ENCODE measurements at regions of chr16 and their contacts with region 1.

Region 1: GRCh38 chr16:68737046-68737729 is at the start of gene CDH1:
- DNase-seq: peak; percentile 98 to 99
- H3K4me3 ChIP-seq: peak within 1 kb of the TSS; percentile 99
- H3K4me3 Mint-ChIP-seq: peak within 1 kb of the TSS; percentile 88
- H3K27ac Mint-ChIP-seq: peak within 1 kb of the TSS; percentile 88
- H3K4me1 ChIP-seq: peaks cover 63% of the 10 kb centered on the region
- H3K4me1 Mint-ChIP-seq: peaks cover 44% of the 10 kb centered on the region
- H3K27me3 ChIP-seq: no peaks in the 10 kb centered on the region
- H3K27me3 Mint-ChIP-seq: no peaks in the 10 kb centered on the region
- CTCF ChIP-seq: no peak
- total RNA-seq, gene CDH1: 712 and 783 TPM in 2 replicates

Region 2: DNA sequence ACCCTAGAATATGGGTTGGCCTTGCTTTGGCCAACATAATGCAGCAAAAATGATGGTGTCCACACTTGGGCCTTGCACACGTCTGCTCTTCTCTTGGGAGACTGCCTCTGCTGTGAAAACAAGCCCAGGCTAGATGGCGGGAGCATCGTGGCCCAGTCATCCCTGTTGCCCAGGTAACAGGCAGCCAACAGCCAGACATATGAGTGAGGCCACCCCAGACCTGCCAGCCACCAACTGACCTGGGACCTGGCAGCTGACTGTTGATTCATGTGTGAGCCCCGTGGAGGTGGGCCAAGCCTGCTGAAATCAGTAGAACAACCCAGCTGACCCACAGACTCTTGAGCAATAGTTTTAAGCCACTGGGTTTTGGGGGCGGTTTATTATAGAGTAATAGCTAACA is 131.4 kb before region 1 on chr16:
- CTCF ChIA-PET with region 1: no interaction called
- POLR2A ChIA-PET with region 1: interaction called, 17 read pairs
- intact Hi-C with region 1: no loop called
- DNase-seq: no peak
- H3K4me3 ChIP-seq: no peak overlapping the region
- H3K4me3 Mint-ChIP-seq: no peak overlapping the region
- H3K27ac Mint-ChIP-seq: no peak overlapping the region
- H3K4me1 ChIP-seq: no peaks in the 10 kb centered on the region
- H3K4me1 Mint-ChIP-seq: no peaks in the 10 kb centered on the region
- H3K27me3 ChIP-seq: no peaks in the 10 kb centered on the region
- H3K27me3 Mint-ChIP-seq: no peaks in the 10 kb centered on the region
- CTCF ChIP-seq: no peak

Region 3: DNA sequence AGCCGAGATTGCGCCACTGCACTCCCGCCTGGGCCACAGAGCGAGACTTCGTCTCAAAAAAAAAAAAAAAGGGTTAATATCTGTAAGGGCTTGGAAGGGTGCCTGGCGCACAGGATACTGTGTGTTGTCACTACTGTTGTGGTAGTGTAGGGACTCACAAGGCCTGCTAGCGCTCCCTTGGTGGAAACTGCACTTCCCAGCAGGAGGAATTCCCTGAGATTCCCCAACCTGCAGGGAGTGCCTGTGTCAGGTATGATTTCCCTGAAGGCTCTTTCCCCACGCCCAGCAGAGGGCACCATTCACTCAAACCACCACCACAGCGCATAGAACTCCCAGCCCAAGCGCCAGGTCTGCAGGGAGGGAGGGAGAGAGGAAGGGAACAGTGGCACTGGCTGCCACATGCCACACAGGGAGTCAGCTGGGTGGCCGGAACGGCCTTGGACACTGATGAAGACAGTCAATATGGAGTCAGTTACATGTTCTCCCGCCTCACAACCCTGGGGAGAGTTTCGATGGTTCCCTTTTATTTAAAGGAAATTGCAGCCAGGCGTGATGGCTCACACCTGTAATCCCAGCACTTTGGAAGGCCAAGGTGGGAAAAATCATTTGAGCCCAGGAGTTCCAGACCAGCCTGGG is 32.8 kb before region 1 on chr16:
- CTCF ChIA-PET with region 1: interaction called, 3 read pairs
- POLR2A ChIA-PET with region 1: interaction called, 5 read pairs
- intact Hi-C with region 1: loop called (anchors 1 kb)
- DNase-seq: peak; percentile 93 to 94
- H3K4me3 ChIP-seq: no peak overlapping the region
- H3K4me3 Mint-ChIP-seq: no peak overlapping the region
- H3K27ac Mint-ChIP-seq: peak overlapping the region; percentile 49
- H3K4me1 ChIP-seq: peaks cover 19% of the 10 kb centered on the region
- H3K4me1 Mint-ChIP-seq: peaks cover 21% of the 10 kb centered on the region
- H3K27me3 ChIP-seq: no peaks in the 10 kb centered on the region
- H3K27me3 Mint-ChIP-seq: no peaks in the 10 kb centered on the region
- CTCF ChIP-seq: peak; percentile 92 to 97

Region 4: DNA sequence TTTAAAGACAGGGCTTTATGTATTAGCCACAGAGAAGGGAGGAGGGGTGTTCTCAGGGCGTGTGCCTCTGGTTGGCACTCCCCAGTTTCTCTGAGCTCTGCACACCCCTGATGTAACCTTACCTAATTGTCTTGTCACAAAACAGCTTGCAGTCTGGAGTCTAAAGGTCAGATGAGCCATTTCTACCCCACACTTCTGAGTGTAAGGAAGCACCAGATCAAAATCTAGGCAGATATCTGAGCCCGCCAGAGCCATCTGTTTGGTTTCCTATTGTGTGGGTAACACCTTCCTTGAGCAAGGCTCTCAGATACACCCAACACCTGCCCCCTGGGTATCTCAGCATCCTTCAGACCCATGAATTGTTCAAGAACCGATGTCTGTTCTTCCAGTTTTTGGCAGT is 15.4 kb after region 1 on chr16:
- CTCF ChIA-PET with region 1: interaction called, 7 read pairs
- POLR2A ChIA-PET with region 1: interaction called, 12 read pairs
- intact Hi-C with region 1: no loop called
- DNase-seq: peak; percentile 61 to 66
- H3K4me3 ChIP-seq: no peak overlapping the region
- H3K4me3 Mint-ChIP-seq: peak overlapping the region; percentile 22
- H3K27ac Mint-ChIP-seq: peak overlapping the region; percentile 74
- H3K4me1 ChIP-seq: peaks cover 84% of the 10 kb centered on the region
- H3K4me1 Mint-ChIP-seq: peaks cover 56% of the 10 kb centered on the region
- H3K27me3 ChIP-seq: no peaks in the 10 kb centered on the region
- H3K27me3 Mint-ChIP-seq: no peaks in the 10 kb centered on the region
- CTCF ChIP-seq: no peak

Region 5: DNA sequence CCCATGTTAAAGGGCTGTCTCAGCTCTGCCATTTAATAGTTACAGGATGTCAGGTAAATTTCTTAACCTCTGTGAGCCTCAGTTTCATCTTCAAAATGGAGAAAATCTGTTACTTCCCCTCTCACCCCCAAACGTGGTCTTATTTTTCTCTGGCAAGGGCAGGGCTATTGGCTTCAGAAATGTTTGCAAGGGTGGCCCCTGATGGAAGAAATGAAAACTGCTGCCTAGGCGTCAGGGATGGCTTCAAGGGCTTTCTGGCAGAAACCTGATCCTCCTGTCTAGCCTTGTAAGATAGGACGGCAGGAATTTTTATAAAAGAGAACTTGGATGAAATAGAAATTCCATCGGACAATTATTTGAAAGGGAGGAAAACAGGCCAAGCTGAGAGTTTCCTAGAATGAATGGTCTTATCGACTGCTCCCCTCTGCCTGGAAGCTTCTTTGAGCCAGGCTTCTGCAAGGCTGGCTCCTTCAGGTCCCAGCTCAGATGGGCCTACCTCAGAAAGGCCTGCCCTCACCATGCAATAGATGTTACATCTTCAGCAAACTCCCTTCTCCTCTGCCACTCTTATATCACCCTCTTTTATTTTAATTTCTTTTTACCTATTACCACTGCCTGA is 63.2 kb after region 1 on chr16:
- CTCF ChIA-PET with region 1: interaction called, 3 read pairs
- POLR2A ChIA-PET with region 1: interaction called, 8 read pairs
- intact Hi-C with region 1: loop called (anchors 1 kb)
- DNase-seq: peak; percentile 83 to 88
- H3K4me3 ChIP-seq: no peak overlapping the region
- H3K4me3 Mint-ChIP-seq: no peak overlapping the region
- H3K27ac Mint-ChIP-seq: peak overlapping the region; percentile 7
- H3K4me1 ChIP-seq: peaks cover 62% of the 10 kb centered on the region
- H3K4me1 Mint-ChIP-seq: peaks cover 18% of the 10 kb centered on the region
- H3K27me3 ChIP-seq: no peaks in the 10 kb centered on the region
- H3K27me3 Mint-ChIP-seq: no peaks in the 10 kb centered on the region
- CTCF ChIP-seq: peak; percentile 85 to 86

Region 6: GRCh38 chr16:69112285-69113129 is 375.3 kb after region 1 on chr16:
- CTCF ChIA-PET with region 1: interaction called, 15 read pairs
- POLR2A ChIA-PET with region 1: no interaction called
- intact Hi-C with region 1: no loop called
- DNase-seq: peak; percentile 84 to 85
- H3K4me3 ChIP-seq: no peak overlapping the region
- H3K4me3 Mint-ChIP-seq: no peak overlapping the region
- H3K27ac Mint-ChIP-seq: no peak overlapping the region
- H3K4me1 ChIP-seq: no peaks in the 10 kb centered on the region
- H3K4me1 Mint-ChIP-seq: no peaks in the 10 kb centered on the region
- H3K27me3 ChIP-seq: no peaks in the 10 kb centered on the region
- H3K27me3 Mint-ChIP-seq: no peaks in the 10 kb centered on the region
- CTCF ChIP-seq: peak; percentile 92 to 96